Posterior vena cava (tissue), 2 donors: ENCODE measurements at regions of chr3 and their contacts with region 1.

Region 1: DNA sequence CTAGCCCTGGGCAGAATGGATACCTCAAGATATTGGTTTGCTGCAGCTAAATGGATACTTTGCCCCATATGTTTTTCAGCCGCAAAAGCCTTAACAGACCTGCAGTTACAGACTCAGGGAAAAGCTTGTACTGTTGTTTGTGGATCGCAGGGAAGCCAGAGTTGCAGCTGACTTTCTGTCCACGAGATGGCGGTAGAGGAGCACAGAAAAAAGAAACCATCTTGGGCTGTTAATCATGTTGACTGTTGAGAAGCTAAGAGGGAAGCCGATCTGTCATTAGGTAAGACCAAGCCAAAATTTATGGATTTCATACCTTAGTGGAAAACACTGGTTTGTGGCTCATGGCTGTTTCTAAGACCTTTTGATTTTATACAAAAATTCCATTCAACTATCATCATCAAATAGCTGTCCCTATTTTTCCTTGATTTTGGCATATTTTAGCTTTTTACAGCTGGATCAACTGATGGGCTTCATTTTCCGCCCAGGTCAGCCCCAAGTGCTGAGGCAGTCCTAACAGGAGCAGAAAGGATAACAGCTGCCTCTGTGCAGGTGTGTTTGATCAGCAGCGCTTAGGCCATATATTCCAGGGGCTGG is 205.7 kb upstream of the ZPLD1 start:
- DNase-seq: peak; percentile 84

Region 2: GRCh38 chr3:102532901-102533300 is 303.7 kb after region 1 on chr3:
- intact Hi-C with region 1: loop called (anchors 2 kb)
- DNase-seq: no peak

Region 3: DNA sequence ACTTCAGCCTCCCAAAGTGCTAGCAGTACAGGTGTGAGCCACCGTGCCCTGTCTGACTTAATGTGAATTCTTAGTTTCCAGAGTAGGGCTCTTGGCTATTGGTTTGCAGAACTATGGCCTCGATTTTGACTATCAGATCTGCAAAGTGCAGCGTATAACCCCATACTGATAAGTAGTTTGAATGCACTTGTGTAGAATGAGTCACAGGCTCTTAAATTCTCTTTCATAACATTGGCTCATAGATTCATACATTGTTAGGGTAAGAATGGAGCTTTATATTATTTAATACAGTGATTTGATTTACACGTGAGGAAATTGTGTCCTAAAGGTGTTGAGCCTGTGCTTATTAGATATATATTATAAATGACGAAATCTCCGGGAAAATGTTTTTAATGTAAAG is 315.6 kb after region 1 on chr3:
- intact Hi-C with region 1: loop called in 1 of 2 experiments (anchors 5 kb)
- DNase-seq: no peak